ENCODE measurements at regions of chr1 and their contacts with region 1.

Region 1: DNA sequence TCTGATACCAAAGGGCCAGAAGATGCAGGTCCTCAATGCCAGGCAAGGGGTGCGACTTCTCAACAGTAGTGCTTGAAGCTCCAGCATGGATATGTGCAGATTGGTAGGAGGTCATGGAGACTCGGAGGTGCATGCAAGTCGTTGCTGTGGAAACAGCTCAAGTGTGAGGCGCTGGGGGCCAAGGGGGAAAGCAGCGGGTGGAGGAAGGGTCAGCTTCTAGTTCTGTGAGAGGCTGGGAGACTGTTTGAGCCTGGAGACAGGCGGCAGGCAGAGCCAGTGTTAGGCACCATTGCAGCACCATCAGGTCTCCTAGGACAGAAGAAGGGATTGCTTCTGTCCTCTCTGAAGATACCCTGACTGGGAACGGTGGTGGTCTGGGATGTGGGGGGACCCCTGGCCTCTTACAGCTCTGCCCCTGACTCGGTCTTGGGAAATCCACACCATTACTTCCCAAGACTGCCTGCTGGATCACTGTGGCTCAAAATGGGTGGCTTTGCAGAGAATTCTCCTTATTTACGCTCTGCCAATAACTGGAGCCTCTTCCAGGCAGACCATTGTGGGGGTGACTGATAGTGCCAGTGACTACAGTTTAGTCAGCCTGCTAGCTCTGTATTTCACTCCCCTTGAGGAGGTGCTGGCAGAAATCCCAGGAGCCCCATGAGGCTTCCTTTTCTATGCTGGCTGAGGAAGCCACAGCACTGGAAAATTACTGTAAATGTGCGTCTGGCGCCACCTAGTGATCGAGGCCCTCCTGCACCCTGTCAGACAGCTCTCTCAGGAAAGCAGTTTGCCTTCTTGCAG is 46.3 kb upstream of the VANGL1 start:
- DNase-seq: peak; percentile 82
- ATAC-seq: peak; percentile 55
- H3K4me3 Mint-ChIP-seq: no peak overlapping the region
- H3K27ac Mint-ChIP-seq: no peak overlapping the region
- H3K4me1 Mint-ChIP-seq: no peaks in the 10 kb centered on the region
- H3K27me3 Mint-ChIP-seq: no peaks in the 10 kb centered on the region
- CTCF ChIP-seq: peak; percentile 84

Region 2: GRCh38 chr1:114979278-114979891 is 616.1 kb before region 1 on chr1:
- CTCF ChIA-PET with region 1: no interaction called
- POLR2A ChIA-PET with region 1: no interaction called
- intact Hi-C with region 1: loop called (anchors 10 kb)
- DNase-seq: peak; percentile 80
- ATAC-seq: no peak
- H3K4me3 Mint-ChIP-seq: no peak overlapping the region
- H3K27ac Mint-ChIP-seq: no peak overlapping the region
- H3K4me1 Mint-ChIP-seq: no peaks in the 10 kb centered on the region
- H3K27me3 Mint-ChIP-seq: peaks cover 8% of the 10 kb centered on the region
- CTCF ChIP-seq: peak; percentile 77

Region 3: DNA sequence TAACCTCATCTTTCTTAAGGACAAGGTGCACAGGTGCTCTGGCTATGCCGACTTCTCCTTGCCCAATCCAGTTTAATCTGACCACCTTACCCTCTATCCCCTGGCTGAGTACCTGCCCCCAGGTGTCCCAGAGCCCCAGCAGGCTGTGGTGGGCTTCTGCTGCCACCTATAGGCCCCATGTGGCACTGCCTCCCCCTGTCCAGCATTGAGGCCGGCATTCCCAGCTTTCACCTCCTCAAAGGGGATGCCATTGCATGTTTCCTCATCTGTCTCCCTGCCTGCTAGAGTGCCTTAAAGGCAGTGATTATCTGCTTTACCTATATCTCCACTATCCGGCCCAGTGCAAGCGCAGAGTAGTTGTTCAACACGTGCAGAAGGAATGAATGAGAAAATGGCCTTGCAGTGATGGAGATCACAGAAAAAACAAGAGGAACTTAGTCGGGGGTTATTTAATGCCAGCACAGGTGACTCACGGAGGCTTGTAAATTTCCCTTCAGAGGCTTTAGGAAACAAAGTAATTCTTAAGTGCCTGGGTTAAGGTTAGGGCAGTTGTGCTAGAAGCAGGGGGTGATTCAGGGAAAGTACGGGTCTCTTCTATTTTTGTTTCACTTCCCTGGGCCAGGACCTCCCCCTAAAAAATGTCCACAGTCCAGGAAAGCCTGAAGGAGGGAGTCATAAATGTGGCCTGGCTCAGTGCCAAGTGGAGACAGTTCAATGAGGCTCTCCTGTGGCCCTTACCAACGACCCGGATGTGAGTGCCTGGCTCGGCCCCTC is 125.6 kb before region 1 on chr1:
- CTCF ChIA-PET with region 1: no interaction called
- POLR2A ChIA-PET with region 1: no interaction called
- intact Hi-C with region 1: loop called (anchors 10 kb)
- DNase-seq: peak; percentile 33
- ATAC-seq: peak; percentile 61
- H3K4me3 Mint-ChIP-seq: no peak overlapping the region
- H3K27ac Mint-ChIP-seq: no peak overlapping the region
- H3K4me1 Mint-ChIP-seq: no peaks in the 10 kb centered on the region
- H3K27me3 Mint-ChIP-seq: peaks cover 3% of the 10 kb centered on the region
- CTCF ChIP-seq: peak; percentile 80

Region 4: DNA sequence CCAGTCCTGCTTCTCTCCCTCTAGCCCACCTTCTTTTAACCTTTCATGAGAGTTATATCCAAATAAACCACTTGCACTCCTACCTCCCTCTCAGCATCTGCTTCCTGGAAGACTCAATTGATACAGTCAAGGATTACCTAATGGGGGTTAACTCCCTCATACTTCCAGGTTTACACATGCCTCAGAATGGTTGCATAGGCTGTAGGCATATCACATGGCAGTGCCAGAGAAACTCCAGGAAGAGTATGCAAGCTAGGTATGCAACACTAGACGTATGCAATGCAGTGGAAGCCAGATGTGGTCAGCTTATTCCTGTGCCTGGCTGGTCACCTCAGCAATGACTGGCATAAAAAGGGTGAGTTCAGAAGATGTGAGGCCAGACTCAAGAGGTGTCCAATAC is 13.5 kb after region 1 on chr1:
- CTCF ChIA-PET with region 1: interaction called, 12 read pairs
- POLR2A ChIA-PET with region 1: no interaction called
- intact Hi-C with region 1: no loop called
- DNase-seq: no peak
- ATAC-seq: no peak
- H3K4me3 Mint-ChIP-seq: no peak overlapping the region
- H3K27ac Mint-ChIP-seq: no peak overlapping the region
- H3K4me1 Mint-ChIP-seq: no peaks in the 10 kb centered on the region
- H3K27me3 Mint-ChIP-seq: peaks cover 1% of the 10 kb centered on the region
- CTCF ChIP-seq: no peak

Region 5: GRCh38 chr1:115624859-115625258 is 29.4 kb after region 1 on chr1:
- CTCF ChIA-PET with region 1: no interaction called
- POLR2A ChIA-PET with region 1: no interaction called
- intact Hi-C with region 1: no loop called
- DNase-seq: no peak
- ATAC-seq: no peak
- H3K4me3 Mint-ChIP-seq: no peak overlapping the region
- H3K27ac Mint-ChIP-seq: no peak overlapping the region
- H3K4me1 Mint-ChIP-seq: no peaks in the 10 kb centered on the region
- H3K27me3 Mint-ChIP-seq: peaks cover 5% of the 10 kb centered on the region
- CTCF ChIP-seq: no peak